T-cell (primary cell): ENCODE measurements at regions of chr16 and their contacts with region 1.

Region 1: DNA sequence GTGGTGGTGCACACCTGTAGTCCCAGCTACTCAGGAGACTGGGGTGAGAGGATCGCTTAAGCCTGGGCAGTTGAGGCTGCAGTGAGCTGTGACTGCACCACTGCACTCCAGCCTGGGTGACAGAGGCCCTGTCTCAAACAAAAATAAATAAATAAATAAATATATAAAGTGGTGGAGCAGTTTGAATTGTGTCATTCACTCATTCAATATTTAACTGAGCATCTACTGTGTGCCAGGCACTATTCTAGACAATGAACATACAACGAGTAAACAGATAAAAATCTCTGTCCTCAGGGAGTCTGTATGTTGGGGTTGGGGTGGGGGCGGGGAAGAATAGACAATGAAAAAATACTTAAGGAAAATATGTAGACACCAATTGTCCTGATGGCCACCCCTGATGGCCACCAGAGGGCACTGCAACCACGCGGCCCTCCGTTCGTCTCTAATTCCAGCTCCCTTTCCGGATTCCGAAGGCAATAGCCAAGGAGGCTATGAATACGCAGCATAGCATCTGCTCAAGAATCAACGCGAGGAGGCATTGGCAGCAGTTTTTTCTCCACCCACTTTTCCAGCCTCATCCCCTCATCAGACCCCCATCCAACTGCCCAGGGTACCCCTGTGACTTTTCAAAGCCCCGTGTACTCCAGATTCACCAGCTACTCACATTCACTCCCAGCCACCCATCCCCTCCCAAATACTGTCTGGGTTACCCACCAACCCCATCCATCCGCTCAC is 21.4 kb downstream of the QPRT start:
- DNase-seq: peak; percentile 48 to 91 (median 72)
- ATAC-seq: peak in 3 of 4 experiments; percentile 14 to 32 (median 24)
- H3K4me3 ChIP-seq: no peak overlapping the region
- H3K4me3 Mint-ChIP-seq: peak overlapping the region; percentile 52 to 74 (median 62)
- H3K27ac ChIP-seq: peak overlapping the region; percentile 92
- H3K27ac Mint-ChIP-seq: peak overlapping the region; percentile 97 to 98
- H3K4me1 ChIP-seq: peaks cover 24 to 45% of the 10 kb centered on the region in 2 experiments
- H3K4me1 Mint-ChIP-seq: peaks cover 33 to 39% (median 38%) of the 10 kb centered on the region in 3 donors
- H3K27me3 ChIP-seq: no peaks in the 10 kb centered on the region
- H3K27me3 Mint-ChIP-seq: no peaks in the 10 kb centered on the region

Region 2: DNA sequence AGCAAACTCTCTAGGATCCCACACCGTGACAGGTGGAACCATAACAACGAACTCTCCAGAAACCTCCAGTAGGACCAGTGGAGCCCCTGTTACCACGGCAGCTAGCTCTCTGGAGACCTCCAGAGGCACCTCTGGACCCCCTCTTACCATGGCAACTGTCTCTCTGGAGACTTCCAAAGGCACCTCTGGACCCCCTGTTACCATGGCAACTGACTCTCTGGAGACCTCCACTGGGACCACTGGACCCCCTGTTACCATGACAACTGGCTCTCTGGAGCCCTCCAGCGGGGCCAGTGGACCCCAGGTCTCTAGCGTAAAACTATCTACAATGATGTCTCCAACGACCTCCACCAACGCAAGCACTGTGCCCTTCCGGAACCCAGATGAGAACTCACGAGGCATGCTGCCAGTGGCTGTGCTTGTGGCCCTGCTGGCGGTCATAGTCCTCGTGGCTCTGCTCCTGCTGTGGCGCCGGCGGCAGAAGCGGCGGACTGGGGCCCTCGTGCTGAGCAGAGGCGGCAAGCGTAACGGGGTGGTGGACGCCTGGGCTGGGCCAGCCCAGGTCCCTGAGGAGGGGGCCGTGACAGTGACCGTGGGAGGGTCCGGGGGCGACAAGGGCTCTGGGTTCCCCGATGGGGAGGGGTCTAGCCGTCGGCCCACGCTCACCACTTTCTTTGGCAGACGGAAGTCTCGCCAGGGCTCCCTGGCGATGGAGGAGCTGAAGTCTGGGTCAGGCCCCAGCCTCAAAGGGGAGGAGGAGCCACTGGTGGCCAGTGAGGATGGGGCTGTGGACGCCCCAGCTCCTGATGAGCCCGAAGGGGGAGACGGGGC is 36.1 kb before region 1 on chr16:
- CTCF ChIA-PET with region 1: no interaction called
- POLR2A ChIA-PET with region 1: no interaction called
- DNase-seq: peak in 32 of 35 experiments; percentile 22 to 64 (median 46)
- ATAC-seq: peak; percentile 24 to 45 (median 32)
- H3K4me3 ChIP-seq: peak overlapping the region; percentile 70 to 96
- H3K4me3 Mint-ChIP-seq: peak overlapping the region; percentile 96 to 99 (median 98)
- H3K27ac ChIP-seq: peak overlapping the region; percentile 77
- H3K27ac Mint-ChIP-seq: peak overlapping the region; percentile 96 to 98
- H3K4me1 ChIP-seq: peaks cover 27 to 79% of the 10 kb centered on the region in 2 experiments
- H3K4me1 Mint-ChIP-seq: peaks cover 57 to 82% (median 73%) of the 10 kb centered on the region in 3 donors
- H3K27me3 ChIP-seq: no peaks in the 10 kb centered on the region
- H3K27me3 Mint-ChIP-seq: no peaks in the 10 kb centered on the region

Region 3: DNA sequence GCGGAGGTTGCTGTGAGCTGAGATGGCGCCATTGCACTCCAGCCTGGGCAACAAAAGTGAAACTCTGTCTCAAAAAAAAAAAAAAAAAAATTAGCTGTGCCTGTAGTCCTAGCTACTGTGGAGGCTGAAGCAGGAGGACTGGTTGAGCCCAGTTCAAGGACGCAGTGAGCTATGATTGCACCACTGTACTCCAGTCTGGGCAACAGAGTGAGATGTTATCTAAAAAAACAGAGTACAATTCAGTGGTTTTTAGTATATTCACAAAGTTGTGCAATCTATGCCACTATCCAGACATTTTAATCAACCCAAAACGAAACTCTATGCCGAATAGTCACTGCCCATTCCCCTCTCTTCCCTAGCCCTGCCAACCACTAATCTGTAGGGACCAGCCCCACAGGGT is 20.3 kb after region 1 on chr16:
- CTCF ChIA-PET with region 1: interaction called in 1 of 2 experiments, 11 read pairs
- POLR2A ChIA-PET with region 1: no interaction called
- DNase-seq: no peak
- ATAC-seq: no peak
- H3K4me3 ChIP-seq: no peak overlapping the region
- H3K4me3 Mint-ChIP-seq: no peak overlapping the region
- H3K27ac ChIP-seq: no peak overlapping the region
- H3K27ac Mint-ChIP-seq: no peak overlapping the region
- H3K4me1 ChIP-seq: peaks cover 0 to 8% of the 10 kb centered on the region in 2 experiments
- H3K4me1 Mint-ChIP-seq: peaks cover 18 to 21% (median 18%) of the 10 kb centered on the region in 3 donors
- H3K27me3 ChIP-seq: no peaks in the 10 kb centered on the region
- H3K27me3 Mint-ChIP-seq: no peaks in the 10 kb centered on the region

Region 4: GRCh38 chr16:29745853-29746345 is 45.5 kb after region 1 on chr16 and contains the start of gene C16orf54:
- CTCF ChIA-PET with region 1: interaction called in 1 of 2 experiments, 15 read pairs
- POLR2A ChIA-PET with region 1: interaction called in 1 of 2 experiments, 7 read pairs
- DNase-seq: peak; percentile 86 to 97 (median 94)
- ATAC-seq: peak; percentile 83 to 89 (median 86)
- H3K4me3 ChIP-seq: peak within 1 kb of the TSS; percentile 80 to 94
- H3K4me3 Mint-ChIP-seq: peak within 1 kb of the TSS; percentile 98 to 99 (median 98)
- H3K27ac ChIP-seq: peak within 1 kb of the TSS; percentile 98
- H3K27ac Mint-ChIP-seq: peak within 1 kb of the TSS; percentile 98 to 99
- H3K4me1 ChIP-seq: peaks cover 44 to 74% of the 10 kb centered on the region in 2 experiments
- H3K4me1 Mint-ChIP-seq: peaks cover 64 to 70% (median 65%) of the 10 kb centered on the region in 3 donors
- H3K27me3 ChIP-seq: no peaks in the 10 kb centered on the region
- H3K27me3 Mint-ChIP-seq: peaks cover 0 to 2% of the 10 kb centered on the region in 2 donors
- total RNA-seq, gene C16orf54: 122 to 194 (median 142) TPM

Region 5: DNA sequence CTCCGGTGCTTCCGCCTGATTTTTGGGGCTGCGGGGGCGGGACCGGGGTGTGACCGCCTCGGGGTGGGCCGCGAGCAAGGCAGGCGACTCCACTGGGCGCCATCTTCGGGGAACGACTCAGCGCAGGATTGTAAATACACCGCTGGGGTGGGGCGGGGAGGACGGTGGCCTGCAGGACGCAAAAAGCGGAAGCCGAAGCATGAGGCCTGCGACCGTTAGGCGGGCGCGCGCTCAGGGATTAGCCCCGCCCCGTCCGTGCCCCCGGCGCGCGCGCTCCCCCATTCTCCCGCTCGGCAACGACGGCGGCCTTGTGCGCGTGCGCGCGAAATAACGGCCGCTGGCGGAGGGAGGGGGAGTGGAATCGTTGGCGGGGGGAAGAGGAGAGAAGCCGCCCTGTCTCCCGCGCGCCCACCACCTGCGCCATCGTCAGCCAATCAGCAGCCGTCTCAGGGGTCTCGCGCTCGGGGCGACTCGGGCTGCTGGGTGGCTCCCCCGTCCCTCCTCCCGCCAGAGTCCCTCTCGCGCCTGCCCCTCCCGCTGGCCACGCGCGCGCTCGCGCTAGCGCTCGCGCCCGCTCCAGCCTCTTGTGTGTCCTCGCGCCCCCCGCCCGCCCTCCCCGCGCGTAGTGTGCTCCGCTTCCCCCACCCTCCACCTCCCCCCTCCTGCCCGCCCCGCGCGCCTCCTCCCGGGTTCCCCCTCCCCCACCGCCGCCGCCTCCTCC is 105.1 kb after region 1 on chr16:
- CTCF ChIA-PET with region 1: interaction called in 1 of 2 experiments, 21 read pairs
- POLR2A ChIA-PET with region 1: interaction called in 1 of 2 experiments, 9 read pairs
- DNase-seq: peak; percentile 96 to 99 (median 98)
- ATAC-seq: peak; percentile 64 to 71 (median 68)
- H3K4me3 ChIP-seq: peak overlapping the region; percentile 83 to 88
- H3K4me3 Mint-ChIP-seq: peak overlapping the region; percentile 84 to 100 (median 96)
- H3K27ac ChIP-seq: peak overlapping the region; percentile 90
- H3K27ac Mint-ChIP-seq: peak overlapping the region; percentile 99 to 100
- H3K4me1 ChIP-seq: peaks cover 28 to 49% of the 10 kb centered on the region in 2 experiments
- H3K4me1 Mint-ChIP-seq: peaks cover 43 to 45% (median 45%) of the 10 kb centered on the region in 3 donors
- H3K27me3 ChIP-seq: no peaks in the 10 kb centered on the region
- H3K27me3 Mint-ChIP-seq: no peaks in the 10 kb centered on the region

Region 6: GRCh38 chr16:29848420-29849297 is 148.2 kb after region 1 on chr16:
- CTCF ChIA-PET with region 1: interaction called, 4 to 66 read pairs
- POLR2A ChIA-PET with region 1: interaction called, 4 to 8 read pairs
- DNase-seq: peak; percentile 59 to 88 (median 78)
- ATAC-seq: peak; percentile 90 to 94 (median 92)
- H3K4me3 ChIP-seq: no peak overlapping the region
- H3K4me3 Mint-ChIP-seq: no peak overlapping the region
- H3K27ac ChIP-seq: no peak overlapping the region
- H3K27ac Mint-ChIP-seq: peak overlapping the region; percentile 69 to 72
- H3K4me1 ChIP-seq: peaks cover 0 to 9% of the 10 kb centered on the region in 2 experiments
- H3K4me1 Mint-ChIP-seq: peaks cover 5 to 13% (median 12%) of the 10 kb centered on the region in 3 donors
- H3K27me3 ChIP-seq: no peaks in the 10 kb centered on the region
- H3K27me3 Mint-ChIP-seq: no peaks in the 10 kb centered on the region